AG04450 (cell line): ENCODE measurements at regions of chr18 and their contacts with region 1.

Region 1: DNA sequence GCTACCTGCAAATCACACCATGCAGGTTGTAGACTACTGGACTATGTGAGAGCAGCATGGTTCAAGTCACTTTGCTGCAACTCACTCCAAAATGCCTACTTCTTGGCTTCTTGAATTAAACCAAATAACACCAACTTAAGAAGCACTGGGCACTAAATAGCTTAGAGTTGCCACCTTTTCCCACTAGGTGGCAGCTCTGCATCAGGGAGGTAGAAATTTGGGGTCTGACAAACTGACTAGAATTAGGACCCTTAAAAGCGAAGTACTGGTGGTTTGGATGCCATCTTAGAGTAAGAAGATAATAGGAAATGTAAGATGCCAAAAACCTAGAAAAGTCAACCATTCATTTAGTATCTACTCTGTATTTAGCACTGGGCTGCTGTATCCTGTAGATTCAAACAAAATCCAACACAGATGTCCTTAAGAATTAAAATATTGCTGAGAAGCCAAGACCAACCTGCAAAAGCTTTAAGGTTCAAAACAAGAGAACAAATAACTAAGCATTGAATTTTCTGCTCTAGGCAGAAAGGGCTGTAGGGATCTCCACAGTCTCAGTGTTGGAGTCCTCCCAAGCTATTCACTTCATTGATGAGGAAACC is 65.5 kb downstream of the CCBE1 start:
- DNase-seq: no peak
- H3K4me3 ChIP-seq: no peak overlapping the region
- H3K27ac ChIP-seq: no peak overlapping the region
- H3K27me3 ChIP-seq: no peaks in the 10 kb centered on the region
- CTCF ChIP-seq: peak; percentile 87

Region 2: GRCh38 chr18:59690996-59691395 is 59.3 kb after region 1 on chr18:
- CTCF ChIA-PET with region 1: interaction called, 15 read pairs
- POLR2A ChIA-PET with region 1: no interaction called
- DNase-seq: no peak
- H3K4me3 ChIP-seq: no peak overlapping the region
- H3K27ac ChIP-seq: no peak overlapping the region
- H3K27me3 ChIP-seq: no peaks in the 10 kb centered on the region
- CTCF ChIP-seq: no peak